MCF 10A (cell line): ENCODE measurements at regions of chr11 and their contacts with region 1.

Region 1: GRCh38 chr11:75802913-75803820 is 11.8 kb upstream of the UVRAG start:
- DNase-seq: peak; percentile 76
- H3K4me3 Mint-ChIP-seq: no peak overlapping the region
- H3K27ac Mint-ChIP-seq: no peak overlapping the region
- H3K4me1 Mint-ChIP-seq: no peaks in the 10 kb centered on the region
- H3K27me3 Mint-ChIP-seq: no peaks in the 10 kb centered on the region
- CTCF ChIP-seq: peak; percentile 79

Region 2: DNA sequence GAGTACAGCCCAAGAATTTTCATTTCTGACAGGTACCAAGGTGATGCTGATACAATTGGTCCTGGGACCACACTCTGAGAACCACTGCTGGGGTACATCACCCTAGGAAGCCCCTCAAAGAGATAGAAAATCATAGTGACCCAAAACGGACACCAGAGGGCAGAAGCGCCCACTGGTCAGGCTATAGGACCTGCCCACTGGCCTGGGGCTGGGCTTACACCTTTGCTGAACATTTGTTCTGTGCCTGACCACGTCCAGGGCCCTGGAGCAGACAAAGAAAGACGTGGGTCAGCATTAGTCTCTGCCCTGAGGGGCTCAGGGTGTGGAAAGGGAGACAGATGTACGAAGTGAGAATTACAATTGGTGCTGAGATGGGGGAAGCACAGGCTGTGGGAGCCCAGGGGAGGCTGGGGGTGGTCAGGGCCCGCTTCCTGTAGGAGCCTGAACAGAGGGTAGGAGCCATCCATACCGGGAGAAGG is 255.5 kb before region 1 on chr11:
- CTCF ChIA-PET with region 1: interaction called, 3 read pairs
- POLR2A ChIA-PET with region 1: no interaction called
- intact Hi-C with region 1: loop called (anchors 1 kb)
- DNase-seq: peak; percentile 71
- H3K4me3 Mint-ChIP-seq: no peak overlapping the region
- H3K27ac Mint-ChIP-seq: no peak overlapping the region
- H3K4me1 Mint-ChIP-seq: peaks cover 5% of the 10 kb centered on the region
- H3K27me3 Mint-ChIP-seq: no peaks in the 10 kb centered on the region
- CTCF ChIP-seq: peak; percentile 84

Region 3: GRCh38 chr11:75777461-75778110 is 25.6 kb before region 1 on chr11:
- CTCF ChIA-PET with region 1: interaction called, 20 read pairs
- POLR2A ChIA-PET with region 1: no interaction called
- intact Hi-C with region 1: no loop called
- DNase-seq: peak; percentile 36
- H3K4me3 Mint-ChIP-seq: no peak overlapping the region
- H3K27ac Mint-ChIP-seq: no peak overlapping the region
- H3K4me1 Mint-ChIP-seq: peaks cover 17% of the 10 kb centered on the region
- H3K27me3 Mint-ChIP-seq: no peaks in the 10 kb centered on the region
- CTCF ChIP-seq: no peak

Region 4: GRCh38 chr11:75862437-75862836 is 59.3 kb after region 1 on chr11:
- CTCF ChIA-PET with region 1: interaction called, 73 read pairs
- POLR2A ChIA-PET with region 1: interaction called, 3 read pairs
- intact Hi-C with region 1: loop called (anchors 1 kb)
- DNase-seq: no peak
- H3K4me3 Mint-ChIP-seq: no peak overlapping the region
- H3K27ac Mint-ChIP-seq: no peak overlapping the region
- H3K4me1 Mint-ChIP-seq: peaks cover 7% of the 10 kb centered on the region
- H3K27me3 Mint-ChIP-seq: no peaks in the 10 kb centered on the region
- CTCF ChIP-seq: no peak

Region 5: DNA sequence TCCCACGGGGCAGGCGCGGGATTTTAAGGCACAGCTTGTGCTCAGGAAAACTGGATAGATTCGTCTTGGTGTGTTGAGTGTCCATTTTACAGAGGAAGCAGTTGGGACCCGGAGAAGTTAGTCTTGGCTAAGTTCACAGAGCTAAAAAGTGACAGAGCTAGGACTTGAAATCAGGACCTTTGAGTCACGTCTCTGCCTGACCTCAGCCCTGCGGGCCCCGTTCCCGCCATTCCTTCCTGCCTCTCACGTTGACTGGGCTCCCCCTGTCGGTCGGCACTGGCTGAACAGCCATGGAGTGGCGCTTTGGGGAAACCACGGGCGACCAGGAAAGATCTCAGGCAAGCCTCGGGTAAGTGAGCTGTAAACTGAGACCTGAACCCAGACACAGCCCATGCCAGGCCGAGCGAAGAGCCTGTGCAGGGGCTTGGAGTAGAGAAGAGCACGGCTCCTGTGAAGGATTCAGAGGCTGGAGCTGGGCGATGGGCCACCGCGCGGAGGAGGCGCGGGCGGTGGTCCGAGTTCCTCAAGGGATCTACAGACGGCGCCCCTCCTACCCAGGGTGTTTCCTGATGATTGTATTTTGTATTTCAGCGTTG is 349.0 kb after region 1 on chr11:
- CTCF ChIA-PET with region 1: interaction called, 7 read pairs
- POLR2A ChIA-PET with region 1: no interaction called
- intact Hi-C with region 1: loop called (anchors 1 kb)
- DNase-seq: peak; percentile 81
- H3K4me3 Mint-ChIP-seq: no peak overlapping the region
- H3K27ac Mint-ChIP-seq: no peak overlapping the region
- H3K4me1 Mint-ChIP-seq: peaks cover 9% of the 10 kb centered on the region
- H3K27me3 Mint-ChIP-seq: peaks cover 11% of the 10 kb centered on the region
- CTCF ChIP-seq: peak; percentile 97